Mammary epithelial cell (primary cell): ENCODE measurements at regions of chr16 and their contacts with region 1.

Region 1: DNA sequence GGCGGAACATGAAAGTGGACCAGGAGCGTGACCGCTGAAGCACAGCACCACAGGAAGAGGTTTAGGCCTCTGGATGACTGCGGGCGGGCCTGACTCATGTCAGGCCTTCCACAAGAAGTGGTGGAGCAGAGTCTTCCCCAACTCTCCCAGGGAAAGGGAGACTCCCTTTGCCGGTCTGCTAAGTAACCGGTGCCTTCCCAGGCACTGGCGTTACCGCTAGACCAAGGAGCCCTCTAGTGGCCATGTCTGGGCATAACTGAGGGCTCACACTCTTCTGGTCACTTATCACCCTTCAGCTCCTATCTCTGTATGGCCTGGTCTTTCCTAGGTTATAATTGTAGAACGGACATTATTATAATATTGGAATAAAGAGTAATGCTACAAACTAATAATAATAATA is 1931.9 kb downstream of the TP53TG3F start:
- DNase-seq: peak; percentile 29
- H3K4me3 ChIP-seq: no peak overlapping the region
- H3K27ac ChIP-seq: no peak overlapping the region
- H3K4me1 ChIP-seq: no peaks in the 10 kb centered on the region
- H3K27me3 ChIP-seq: no peaks in the 10 kb centered on the region
- CTCF ChIP-seq: peak; percentile 60 to 88

Region 2: DNA sequence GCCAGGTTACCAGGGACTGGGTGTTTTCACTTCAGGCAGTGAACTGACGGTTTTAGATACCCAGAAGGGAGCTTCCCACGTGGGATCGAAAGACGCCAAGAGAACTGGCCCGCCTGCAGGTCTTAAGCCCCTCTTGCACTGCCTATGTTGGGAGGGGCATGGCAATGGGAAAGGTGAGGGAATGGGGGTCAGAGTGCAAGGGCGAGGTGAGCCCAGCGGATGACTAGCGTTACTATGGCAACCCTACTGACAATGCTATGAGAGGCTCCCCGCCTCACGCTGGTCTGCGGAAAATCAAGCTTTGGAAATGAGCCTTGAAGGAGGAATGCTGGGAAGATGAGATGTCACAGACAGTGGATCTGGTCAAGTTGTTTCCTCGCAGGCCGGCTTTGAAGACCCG is 251.5 kb before region 1 on chr16:
- CTCF ChIA-PET with region 1: no interaction called
- dilution Hi-C with region 1: no loop called
- in situ Hi-C with region 1: no loop called
- intact Hi-C with region 1: loop called (anchors 5 kb)
- DNase-seq: no peak
- H3K4me3 ChIP-seq: no peak overlapping the region
- H3K27ac ChIP-seq: no peak overlapping the region
- H3K4me1 ChIP-seq: peaks cover 18% of the 10 kb centered on the region
- H3K27me3 ChIP-seq: no peaks in the 10 kb centered on the region
- CTCF ChIP-seq: no peak

Region 3: DNA sequence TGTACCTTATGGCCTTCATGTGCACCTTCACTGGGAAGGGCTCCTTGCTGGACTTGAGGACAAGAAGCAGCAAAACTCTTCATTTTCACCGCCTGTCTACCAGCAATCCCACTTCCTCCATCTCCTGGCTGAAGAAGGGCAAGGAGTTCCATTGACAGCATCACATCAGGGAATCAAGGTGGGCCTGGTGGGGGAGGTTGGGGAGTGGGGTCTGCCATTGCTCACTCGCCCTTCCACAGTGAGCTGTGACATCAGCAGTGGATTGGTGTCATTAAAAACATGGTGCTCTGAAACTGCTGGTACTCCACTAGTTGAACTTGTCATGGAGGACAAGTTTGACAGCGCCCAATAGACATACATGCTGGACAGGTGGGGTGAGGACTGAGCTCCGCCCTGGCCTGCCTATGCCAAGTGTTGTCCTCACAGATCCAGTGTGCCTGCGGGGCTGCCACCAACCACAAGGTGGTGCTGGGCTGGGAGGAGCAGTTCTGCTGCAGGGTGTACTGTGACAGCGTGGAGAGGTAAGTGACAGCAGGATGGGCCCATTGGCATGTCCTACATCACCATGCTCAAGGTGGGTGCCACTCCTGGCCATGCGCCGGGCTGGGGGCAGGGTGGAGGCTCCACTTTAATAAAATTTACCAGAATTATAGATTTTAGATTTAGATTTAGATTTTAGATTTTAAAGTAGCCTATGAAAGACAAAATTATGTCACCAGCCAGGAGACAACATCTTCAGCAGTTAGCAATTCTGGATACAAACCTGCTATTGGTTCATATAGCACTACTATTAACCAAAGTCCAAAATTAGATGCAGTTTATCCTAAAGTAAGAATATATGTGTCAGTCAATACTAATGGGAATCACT is 202.8 kb before region 1 on chr16:
- CTCF ChIA-PET with region 1: interaction called, 9 read pairs
- dilution Hi-C with region 1: no loop called
- in situ Hi-C with region 1: loop called in 1 of 2 experiments (anchors 25 kb)
- intact Hi-C with region 1: loop called (anchors 1 kb)
- DNase-seq: no peak
- H3K4me3 ChIP-seq: no peak overlapping the region
- H3K27ac ChIP-seq: no peak overlapping the region
- H3K4me1 ChIP-seq: no peaks in the 10 kb centered on the region
- H3K27me3 ChIP-seq: no peaks in the 10 kb centered on the region
- CTCF ChIP-seq: peak; percentile 31 to 67

Region 4: DNA sequence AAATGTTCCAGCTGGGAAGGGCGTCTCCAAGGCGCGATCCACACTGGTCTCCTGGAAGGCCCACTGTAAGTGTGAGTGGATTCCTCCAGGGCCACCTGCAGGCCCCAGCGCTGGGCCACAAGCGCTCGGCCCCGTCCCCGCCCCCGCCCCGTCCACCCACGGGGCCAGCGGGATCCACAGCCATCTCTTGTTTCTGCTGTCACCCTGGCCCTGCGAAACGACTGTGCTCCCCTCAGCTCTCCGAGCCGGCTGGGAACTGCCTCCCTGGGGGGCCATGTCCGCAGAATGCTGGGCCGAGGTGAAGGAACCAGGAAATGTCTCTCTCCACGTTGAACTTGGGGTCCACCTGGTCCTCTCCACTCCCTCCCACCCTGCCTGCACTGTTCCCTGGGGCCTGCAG is 23.2 kb after region 1 on chr16:
- CTCF ChIA-PET with region 1: no interaction called
- dilution Hi-C with region 1: no loop called
- in situ Hi-C with region 1: no loop called
- intact Hi-C with region 1: no loop called
- DNase-seq: no peak
- H3K4me3 ChIP-seq: no peak overlapping the region
- H3K27ac ChIP-seq: no peak overlapping the region
- H3K4me1 ChIP-seq: no peaks in the 10 kb centered on the region
- H3K27me3 ChIP-seq: no peaks in the 10 kb centered on the region
- CTCF ChIP-seq: no peak